BJ (cell line): ENCODE measurements at regions of chr19 and their contacts with region 1.

Region 1: DNA sequence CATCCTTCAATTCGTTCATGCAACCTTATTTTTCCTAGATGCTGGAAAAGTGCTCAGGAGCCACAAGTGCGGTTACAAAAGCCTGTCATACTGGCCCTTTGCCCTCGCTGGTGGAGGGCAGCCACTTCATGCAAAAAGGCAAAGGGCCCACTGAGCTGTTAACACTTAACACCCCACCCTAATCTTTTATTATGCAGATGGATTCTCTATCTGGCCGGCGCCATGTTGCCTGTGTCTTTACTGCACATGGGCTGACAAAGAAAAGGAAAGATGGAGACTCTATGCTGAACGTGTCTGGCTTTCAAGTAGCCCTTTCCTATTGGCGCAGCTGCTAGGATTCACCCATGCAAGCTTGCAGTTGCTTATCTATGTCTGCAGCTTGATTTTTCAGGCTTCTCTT is 10.8 kb downstream of the OR7D2 start:
- DNase-seq: no peak
- H3K4me3 ChIP-seq: no peak overlapping the region
- H3K27me3 ChIP-seq: no peaks in the 10 kb centered on the region
- CTCF ChIP-seq: no peak

Region 2: GRCh38 chr19:9205501-9206113 is 16.1 kb after region 1 on chr19:
- CTCF ChIA-PET with region 1: interaction called, 15 read pairs
- POLR2A ChIA-PET with region 1: no interaction called
- DNase-seq: peak; percentile 2
- H3K4me3 ChIP-seq: peak overlapping the region; percentile 43
- H3K27me3 ChIP-seq: no peaks in the 10 kb centered on the region
- CTCF ChIP-seq: peak; percentile 91